ENCODE measurements at regions of chr2 and their contacts with region 1.

Region 1: DNA sequence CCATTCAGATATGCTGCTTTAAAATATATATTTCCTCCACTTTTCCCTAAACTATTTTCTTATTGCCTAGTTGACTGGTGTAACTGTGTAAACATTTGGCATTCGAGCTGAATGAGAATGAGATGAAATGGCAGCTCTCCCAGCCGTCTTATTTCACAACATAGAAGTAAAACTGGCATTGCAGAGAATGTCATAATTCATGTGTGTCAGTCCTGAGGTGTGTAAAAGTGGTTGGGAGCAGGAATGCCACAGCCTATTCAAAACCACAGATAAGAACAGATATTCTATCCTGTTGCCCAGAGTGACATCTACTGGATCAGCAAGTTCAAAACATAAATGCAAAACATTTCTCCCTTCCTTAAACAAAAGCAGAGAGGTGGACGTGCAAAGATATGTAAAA is 565.5 kb upstream of the CHAC2 start:
- DNase-seq: peak; percentile 95
- ATAC-seq: peak; percentile 99
- H3K4me3 ChIP-seq: no peak overlapping the region
- H3K27ac ChIP-seq: peak overlapping the region; percentile 44
- H3K4me1 ChIP-seq: peaks cover 13% of the 10 kb centered on the region
- H3K27me3 ChIP-seq: no peaks in the 10 kb centered on the region
- CTCF ChIP-seq: peak; percentile 73

Region 2: GRCh38 chr2:52416340-52416739 is 785.7 kb before region 1 on chr2:
- CTCF ChIA-PET with region 1: no interaction called
- POLR2A ChIA-PET with region 1: no interaction called
- intact Hi-C with region 1: loop called (anchors 5 kb)
- DNase-seq: peak; percentile 47
- ATAC-seq: peak; percentile 64
- H3K4me3 ChIP-seq: no peak overlapping the region
- H3K27ac ChIP-seq: no peak overlapping the region
- H3K4me1 ChIP-seq: 0 out of 2 replicates have a peak, but pooled peaks cover 3% of the 10 kb centered on the region
- H3K27me3 ChIP-seq: no peaks in the 10 kb centered on the region
- CTCF ChIP-seq: peak; percentile 60

Region 3: DNA sequence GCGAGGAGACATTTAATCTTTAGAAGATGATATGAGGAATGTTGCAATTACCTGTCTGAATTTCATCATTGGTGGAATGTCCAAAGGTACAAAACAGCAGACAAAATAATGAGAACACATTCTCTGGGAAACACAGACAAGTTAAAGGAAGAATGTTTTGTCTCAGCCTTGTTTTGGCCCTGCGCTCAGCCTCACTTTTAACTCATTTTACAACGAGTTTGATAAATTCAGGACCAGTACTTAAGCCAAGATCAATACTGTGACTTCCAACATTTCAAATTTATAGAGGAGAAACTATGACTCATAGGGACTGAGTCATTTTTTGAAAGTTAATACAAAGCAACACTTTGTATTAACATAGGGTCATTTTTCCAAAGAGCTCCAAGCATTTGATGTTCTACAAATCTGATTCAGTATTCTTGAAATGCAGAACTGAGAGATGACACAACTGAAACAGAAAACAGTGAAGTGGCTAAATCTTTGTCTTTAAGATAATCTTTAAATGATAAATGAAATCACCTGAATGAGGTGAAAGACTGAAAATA is 267.6 kb before region 1 on chr2:
- CTCF ChIA-PET with region 1: no interaction called
- POLR2A ChIA-PET with region 1: no interaction called
- intact Hi-C with region 1: loop called (anchors 2 kb)
- DNase-seq: peak; percentile 97
- ATAC-seq: peak; percentile 71
- H3K4me3 ChIP-seq: peak overlapping the region; percentile 46; the same call in 1 of the 2 replicates
- H3K27ac ChIP-seq: peak overlapping the region; percentile 98
- H3K4me1 ChIP-seq: peaks cover 43% of the 10 kb centered on the region
- H3K27me3 ChIP-seq: no peaks in the 10 kb centered on the region
- CTCF ChIP-seq: no peak

Region 4: DNA sequence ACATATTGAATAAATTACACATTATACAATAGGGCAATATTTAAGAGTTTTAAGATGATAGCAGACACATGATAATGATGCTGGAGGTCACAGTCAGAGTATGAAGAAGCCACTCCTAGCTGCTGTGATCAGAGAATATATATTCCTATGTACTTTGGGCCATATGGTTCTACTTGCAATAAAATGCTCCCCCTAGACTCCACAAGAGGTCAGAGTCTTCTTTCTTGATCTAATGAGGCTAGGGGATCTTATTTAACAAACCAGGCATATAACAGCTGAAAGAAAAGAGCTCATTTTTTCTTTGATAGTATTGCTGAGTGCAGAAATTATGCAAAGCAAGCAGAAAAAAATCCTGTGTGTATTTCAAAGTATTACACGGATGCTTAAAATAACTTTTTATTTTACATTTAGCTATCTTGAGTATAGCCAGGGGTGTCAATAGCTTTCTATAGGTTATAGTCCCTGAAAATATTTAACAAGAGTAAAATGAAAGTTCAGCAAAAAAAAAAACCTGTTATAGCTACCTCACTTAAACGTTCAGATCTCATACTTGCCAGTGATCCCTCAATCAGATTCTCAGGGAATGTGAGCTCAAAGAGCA is 183.1 kb before region 1 on chr2:
- CTCF ChIA-PET with region 1: interaction called, 16 read pairs
- POLR2A ChIA-PET with region 1: no interaction called
- intact Hi-C with region 1: loop called (anchors 1 kb)
- DNase-seq: peak; percentile 47
- ATAC-seq: peak; percentile 77
- H3K4me3 ChIP-seq: no peak overlapping the region
- H3K27ac ChIP-seq: no peak overlapping the region
- H3K4me1 ChIP-seq: peaks cover 11% of the 10 kb centered on the region
- H3K27me3 ChIP-seq: no peaks in the 10 kb centered on the region
- CTCF ChIP-seq: peak; percentile 69

Region 5: DNA sequence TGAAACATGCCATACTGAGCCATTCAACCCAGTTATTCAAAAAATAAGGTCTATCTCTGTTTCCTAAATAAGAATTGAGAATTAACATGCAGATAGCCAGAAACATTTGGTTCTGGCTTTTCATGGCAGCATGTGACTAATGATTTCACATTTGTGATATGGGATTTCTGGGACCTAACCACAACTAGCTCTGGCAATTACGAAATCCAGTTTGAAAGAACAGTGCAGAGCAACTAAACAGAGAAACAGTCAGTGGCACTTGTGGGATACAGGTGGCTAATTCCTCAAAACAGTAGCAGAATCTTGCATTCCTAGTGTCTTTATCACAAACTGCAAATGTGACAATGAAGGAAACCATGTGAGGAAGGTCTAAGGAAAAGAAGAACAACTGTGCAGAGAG is 72.2 kb before region 1 on chr2:
- CTCF ChIA-PET with region 1: no interaction called
- POLR2A ChIA-PET with region 1: no interaction called
- intact Hi-C with region 1: loop called (anchors 1 kb)
- DNase-seq: peak; percentile 76
- ATAC-seq: peak; percentile 43
- H3K4me3 ChIP-seq: peak overlapping the region; percentile 7; the same call in 1 of the 2 replicates
- H3K27ac ChIP-seq: peak overlapping the region; percentile 87
- H3K4me1 ChIP-seq: peaks cover 32% of the 10 kb centered on the region
- H3K27me3 ChIP-seq: no peaks in the 10 kb centered on the region
- CTCF ChIP-seq: no peak

Region 6: DNA sequence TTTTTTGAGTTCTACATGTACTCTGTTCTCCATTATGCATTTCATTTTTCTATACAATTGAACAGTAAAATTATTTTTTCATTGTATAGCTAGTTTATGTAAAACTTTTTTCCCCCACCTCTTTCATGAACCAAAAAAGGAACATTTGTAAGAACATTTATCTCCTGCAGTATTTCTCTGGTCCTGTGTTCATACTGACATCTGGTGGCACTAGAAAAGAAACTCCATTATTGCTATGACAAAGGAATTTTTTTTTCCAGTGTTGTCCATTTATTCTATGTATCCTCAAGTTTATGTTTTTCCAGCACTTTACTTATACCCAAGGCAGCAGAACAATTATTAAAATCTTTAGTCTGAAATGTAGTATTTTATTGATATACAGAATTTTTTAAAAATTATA is 538.1 kb after region 1 on chr2:
- CTCF ChIA-PET with region 1: no interaction called
- POLR2A ChIA-PET with region 1: no interaction called
- intact Hi-C with region 1: loop called (anchors 1 kb)
- DNase-seq: peak; percentile 49
- ATAC-seq: no peak
- H3K4me3 ChIP-seq: no peak overlapping the region
- H3K27ac ChIP-seq: no peak overlapping the region
- H3K4me1 ChIP-seq: 0 out of 2 replicates have a peak, but pooled peaks cover 4% of the 10 kb centered on the region
- H3K27me3 ChIP-seq: no peaks in the 10 kb centered on the region
- CTCF ChIP-seq: peak; percentile 68

Measured in PC-3 (cell line).